H1 (cell line): ENCODE measurements at regions of chr15 and their contacts with region 1.

Region 1: GRCh38 chr15:75042730-75043508 is 19.5 kb downstream of the PPCDC start:
- DNase-seq: peak in 1 of 2 experiments; percentile 73
- H3K4me3 ChIP-seq: no peak overlapping the region
- H3K27ac ChIP-seq: no peak overlapping the region
- H3K4me1 ChIP-seq: peaks cover 0 to 12% (median 8%) of the 10 kb centered on the region in 4 experiments; a peak in 5 of 7 replicates
- H3K27me3 ChIP-seq: no peaks in the 10 kb centered on the region
- CTCF ChIP-seq: peak; percentile 68 to 80 (median 79)
- EP300 ChIP-seq: no peak
- POLR2A ChIP-seq: no peak
- RAD21 ChIP-seq: peak; percentile 76 to 82

Region 2: DNA sequence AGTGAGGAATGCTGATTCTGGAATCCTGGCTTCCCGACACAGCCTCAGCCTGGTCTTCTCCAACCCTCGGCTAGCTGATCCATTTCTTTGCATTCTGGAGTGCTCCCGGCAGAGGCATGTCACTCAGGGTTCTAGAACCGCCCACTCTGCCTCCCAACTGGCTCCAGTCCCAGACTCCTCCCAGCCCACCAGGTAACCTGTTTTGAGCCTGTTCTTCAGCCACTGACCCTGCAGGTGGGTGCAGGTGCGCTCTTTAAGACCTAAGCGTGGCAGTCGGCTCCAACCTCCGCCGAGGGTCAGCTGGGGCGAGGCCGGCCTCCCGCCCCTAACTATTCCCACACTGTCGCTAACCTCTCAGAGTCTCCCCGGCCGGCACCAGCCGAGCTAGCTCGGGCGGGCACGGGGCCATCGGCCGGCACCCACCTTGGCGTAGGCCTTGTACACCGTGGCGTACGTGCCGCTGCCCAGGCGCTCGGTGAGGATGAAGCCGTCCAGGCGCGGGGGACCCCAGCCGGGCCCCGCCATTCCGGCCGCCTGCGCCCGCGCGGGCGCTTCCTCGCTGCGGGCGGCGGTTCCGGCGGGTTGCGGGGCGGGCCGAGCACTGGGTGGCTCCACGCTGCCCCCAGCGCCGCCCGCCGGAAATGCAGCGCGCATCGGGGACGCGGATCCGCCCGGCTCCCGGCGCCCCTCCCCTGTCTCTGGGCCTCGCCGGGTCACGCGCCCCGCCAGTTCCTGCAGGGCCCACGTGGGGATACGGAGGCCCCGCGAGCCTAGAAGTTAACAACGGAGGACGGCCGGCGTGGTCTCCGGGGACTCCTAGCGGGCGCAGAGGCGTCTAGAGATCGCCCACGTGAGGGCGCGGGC is 200.1 kb before region 1 on chr15 and contains the start of gene ULK3:
- CTCF ChIA-PET with region 1: no interaction called
- POLR2A ChIA-PET with region 1: no interaction called
- DNase-seq: peak; percentile 89 to 95
- H3K4me3 ChIP-seq: peak within 1 kb of the TSS; percentile 60 to 92 (median 90)
- H3K27ac ChIP-seq: peak within 1 kb of the TSS; percentile 89
- H3K4me1 ChIP-seq: peaks cover 0 to 13% (median 8%) of the 10 kb centered on the region in 4 experiments; a peak in 6 of 7 replicates
- H3K27me3 ChIP-seq: no peaks in the 10 kb centered on the region
- CTCF ChIP-seq: peak; percentile 60 to 68 (median 62)
- EP300 ChIP-seq: no peak
- POLR2A ChIP-seq: peak in 1 of 2 experiments; percentile 54; a peak in 2 of 3 replicates
- RAD21 ChIP-seq: peak in 1 of 2 experiments; percentile 35; a peak in 1 of 4 replicates
- total RNA-seq, gene ULK3: 25.0 and 27.1 TPM in 2 replicates

Region 3: GRCh38 chr15:75023181-75023871 is 19.6 kb before region 1 on chr15 and contains the start of gene PPCDC:
- CTCF ChIA-PET with region 1: interaction called, 13 read pairs
- POLR2A ChIA-PET with region 1: interaction called, 3 read pairs
- DNase-seq: peak; percentile 77 to 95
- H3K4me3 ChIP-seq: peak within 1 kb of the TSS; percentile 87 to 99 (median 90)
- H3K27ac ChIP-seq: peak within 1 kb of the TSS; percentile 90
- H3K4me1 ChIP-seq: no peaks in the 10 kb centered on the region; a peak in 1 of 7 replicates
- H3K27me3 ChIP-seq: no peaks in the 10 kb centered on the region
- CTCF ChIP-seq: no peak
- EP300 ChIP-seq: no peak
- POLR2A ChIP-seq: peak; percentile 95 to 99
- RAD21 ChIP-seq: peak in 1 of 2 experiments; percentile 7; a peak in 1 of 4 replicates
- total RNA-seq, gene PPCDC: 11.3 and 14.7 TPM in 2 replicates

Region 4: DNA sequence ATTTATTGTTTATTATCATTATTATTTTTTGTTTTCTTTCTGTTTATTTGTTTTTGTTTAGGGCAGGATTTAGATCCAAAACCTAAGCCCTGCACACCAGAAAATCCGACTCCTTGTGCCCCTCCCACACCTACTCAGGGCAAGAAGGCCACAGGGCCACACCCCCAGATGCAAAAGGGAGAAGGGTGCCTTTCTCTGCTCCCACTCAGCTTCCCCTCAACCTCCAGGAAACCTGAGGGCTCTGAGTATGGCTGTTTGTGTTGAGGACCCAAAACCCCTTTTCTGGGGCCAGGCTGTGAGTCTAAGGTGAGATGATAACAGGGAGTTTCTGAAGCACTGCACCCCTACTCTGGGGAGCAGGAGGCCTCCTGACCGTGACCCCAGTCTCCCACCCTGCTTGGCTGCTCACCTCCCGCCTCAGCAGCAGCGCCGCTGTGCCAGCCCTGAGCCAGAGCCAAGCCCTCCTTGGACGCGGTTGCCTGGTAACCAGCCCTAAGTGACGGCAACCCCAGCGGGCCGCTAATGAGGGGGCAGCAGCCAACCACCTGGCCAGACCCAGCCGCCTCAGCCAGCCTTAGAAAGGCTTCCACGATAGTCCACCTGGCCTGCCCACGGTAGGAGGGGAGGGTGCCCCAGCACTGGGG is 152.3 kb after region 1 on chr15:
- CTCF ChIA-PET with region 1: interaction called, 16 read pairs
- POLR2A ChIA-PET with region 1: interaction called, 4 read pairs
- DNase-seq: peak in 1 of 2 experiments; percentile 87
- H3K4me3 ChIP-seq: peak overlapping the region in 3 of 4 experiments; percentile 20 to 53 (median 24); a peak in 4 of 8 replicates
- H3K27ac ChIP-seq: no peak overlapping the region; the same call in 1 of the 2 replicates
- H3K4me1 ChIP-seq: peaks cover 3 to 33% (median 17%) of the 10 kb centered on the region in 4 experiments
- H3K27me3 ChIP-seq: no peaks in the 10 kb centered on the region
- CTCF ChIP-seq: no peak
- EP300 ChIP-seq: no peak
- POLR2A ChIP-seq: no peak
- RAD21 ChIP-seq: no peak; a peak in 1 of 4 replicates

Region 5: DNA sequence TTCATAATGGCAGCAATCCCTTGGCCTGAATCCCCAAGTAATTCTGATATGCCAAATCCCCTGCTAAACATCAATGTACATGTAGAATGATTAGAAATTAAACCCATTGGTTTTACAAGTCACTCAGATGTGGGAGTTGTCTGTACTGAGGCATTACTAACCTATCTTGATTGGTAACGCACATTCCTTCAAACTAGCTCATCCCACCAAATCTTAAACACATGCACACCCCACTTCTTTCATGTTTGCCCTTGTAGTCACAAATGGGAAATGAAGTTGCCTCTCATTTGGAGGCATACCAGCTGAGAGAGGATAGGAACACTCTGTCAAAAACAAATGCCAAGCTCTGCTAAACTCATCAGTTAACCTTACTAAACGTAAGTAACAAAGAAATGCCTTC is 354.6 kb after region 1 on chr15:
- CTCF ChIA-PET with region 1: no interaction called
- POLR2A ChIA-PET with region 1: no interaction called
- DNase-seq: no peak
- H3K4me3 ChIP-seq: no peak overlapping the region
- H3K27ac ChIP-seq: no peak overlapping the region
- H3K4me1 ChIP-seq: no peaks in the 10 kb centered on the region
- H3K27me3 ChIP-seq: no peaks in the 10 kb centered on the region
- CTCF ChIP-seq: no peak
- EP300 ChIP-seq: no peak
- POLR2A ChIP-seq: no peak
- RAD21 ChIP-seq: no peak